ENCODE measurements at regions of chr7 and their contacts with region 1.

Region 1: DNA sequence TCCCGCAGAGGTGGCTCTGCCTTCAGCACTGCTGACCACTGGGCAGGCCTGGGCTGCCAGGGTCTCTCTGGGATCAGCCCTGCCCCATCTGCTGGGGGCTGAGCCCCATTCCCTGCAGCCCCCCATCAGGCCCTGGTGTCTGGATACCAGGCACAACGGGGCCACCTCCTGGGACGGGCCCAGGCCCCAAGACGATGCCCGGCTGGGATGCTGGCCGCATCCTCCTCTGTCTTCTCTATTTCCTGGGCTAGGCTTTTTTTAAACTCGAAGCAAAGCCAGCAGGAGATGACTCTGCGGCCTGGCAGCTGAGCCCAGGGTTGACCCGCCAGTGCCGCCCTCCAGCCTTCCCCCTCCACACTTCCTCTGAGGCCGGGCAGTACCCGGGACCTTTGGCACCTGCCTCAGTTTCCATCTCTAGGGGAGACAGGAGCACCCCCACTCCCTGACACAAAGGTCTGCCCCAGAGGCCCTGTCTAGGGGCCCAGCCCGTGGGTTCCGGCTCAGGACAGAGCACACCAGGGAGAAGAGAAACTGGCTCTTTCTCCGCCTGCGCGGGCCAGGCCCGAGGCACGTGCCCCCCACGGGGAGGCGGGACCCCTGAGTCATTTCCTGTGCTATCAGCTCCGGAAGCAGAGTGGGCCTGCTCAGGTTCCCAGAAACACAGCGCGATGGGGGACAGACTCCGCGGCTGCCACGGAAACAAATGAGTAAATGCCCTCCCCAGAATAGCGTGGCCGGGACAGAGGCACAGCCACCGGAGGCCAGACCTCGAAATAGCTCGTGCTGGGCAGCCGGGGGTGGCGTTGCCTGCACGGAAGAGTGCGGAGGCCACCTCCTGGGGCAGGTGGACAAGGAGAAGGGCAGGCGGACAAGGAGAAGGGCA is 84.6 kb upstream of the PDGFA start:
- DNase-seq: peak; percentile 89
- H3K4me3 Mint-ChIP-seq: peak overlapping the region; percentile 83
- H3K27ac Mint-ChIP-seq: peak overlapping the region; percentile 99
- H3K4me1 Mint-ChIP-seq: peaks cover 46% of the 10 kb centered on the region
- H3K27me3 Mint-ChIP-seq: no peaks in the 10 kb centered on the region

Region 2: GRCh38 chr7:362402-363096 is 241.7 kb before region 1 on chr7:
- intact Hi-C with region 1: loop called (anchors 10 kb)
- DNase-seq: peak; percentile 21
- H3K4me3 Mint-ChIP-seq: peak overlapping the region; percentile 48
- H3K27ac Mint-ChIP-seq: peak overlapping the region; percentile 78
- H3K4me1 Mint-ChIP-seq: peaks cover 51% of the 10 kb centered on the region
- H3K27me3 Mint-ChIP-seq: peaks cover 9% of the 10 kb centered on the region

Region 3: DNA sequence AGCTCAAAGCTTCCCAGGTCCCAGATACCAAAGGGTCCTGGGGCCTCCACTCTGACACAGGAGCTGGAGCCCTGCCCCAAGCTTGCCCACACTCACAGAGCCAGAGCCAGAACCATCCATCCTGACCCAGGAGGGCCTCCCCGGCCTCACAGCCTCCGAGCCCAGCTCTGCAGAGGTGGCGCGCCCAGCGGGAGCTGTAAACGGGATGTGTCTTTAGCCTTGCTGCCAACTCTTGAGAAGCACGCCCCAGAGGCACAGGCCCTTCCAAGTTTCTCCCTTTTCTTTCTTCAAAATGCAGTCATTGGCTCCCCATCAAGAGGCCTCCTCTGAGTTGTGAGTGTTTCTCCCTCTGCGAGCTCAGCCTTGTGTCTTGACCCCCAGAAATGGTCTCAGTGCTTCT is 159.6 kb before region 1 on chr7:
- intact Hi-C with region 1: no loop called
- DNase-seq: no peak
- H3K4me3 Mint-ChIP-seq: no peak overlapping the region
- H3K27ac Mint-ChIP-seq: no peak overlapping the region
- H3K4me1 Mint-ChIP-seq: no peaks in the 10 kb centered on the region
- H3K27me3 Mint-ChIP-seq: peaks cover 1% of the 10 kb centered on the region

Region 4: GRCh38 chr7:531777-532176 is 72.5 kb before region 1 on chr7:
- intact Hi-C with region 1: no loop called
- DNase-seq: no peak
- H3K4me3 Mint-ChIP-seq: no peak overlapping the region
- H3K27ac Mint-ChIP-seq: no peak overlapping the region
- H3K4me1 Mint-ChIP-seq: no peaks in the 10 kb centered on the region
- H3K27me3 Mint-ChIP-seq: peaks cover 3% of the 10 kb centered on the region

Region 5: DNA sequence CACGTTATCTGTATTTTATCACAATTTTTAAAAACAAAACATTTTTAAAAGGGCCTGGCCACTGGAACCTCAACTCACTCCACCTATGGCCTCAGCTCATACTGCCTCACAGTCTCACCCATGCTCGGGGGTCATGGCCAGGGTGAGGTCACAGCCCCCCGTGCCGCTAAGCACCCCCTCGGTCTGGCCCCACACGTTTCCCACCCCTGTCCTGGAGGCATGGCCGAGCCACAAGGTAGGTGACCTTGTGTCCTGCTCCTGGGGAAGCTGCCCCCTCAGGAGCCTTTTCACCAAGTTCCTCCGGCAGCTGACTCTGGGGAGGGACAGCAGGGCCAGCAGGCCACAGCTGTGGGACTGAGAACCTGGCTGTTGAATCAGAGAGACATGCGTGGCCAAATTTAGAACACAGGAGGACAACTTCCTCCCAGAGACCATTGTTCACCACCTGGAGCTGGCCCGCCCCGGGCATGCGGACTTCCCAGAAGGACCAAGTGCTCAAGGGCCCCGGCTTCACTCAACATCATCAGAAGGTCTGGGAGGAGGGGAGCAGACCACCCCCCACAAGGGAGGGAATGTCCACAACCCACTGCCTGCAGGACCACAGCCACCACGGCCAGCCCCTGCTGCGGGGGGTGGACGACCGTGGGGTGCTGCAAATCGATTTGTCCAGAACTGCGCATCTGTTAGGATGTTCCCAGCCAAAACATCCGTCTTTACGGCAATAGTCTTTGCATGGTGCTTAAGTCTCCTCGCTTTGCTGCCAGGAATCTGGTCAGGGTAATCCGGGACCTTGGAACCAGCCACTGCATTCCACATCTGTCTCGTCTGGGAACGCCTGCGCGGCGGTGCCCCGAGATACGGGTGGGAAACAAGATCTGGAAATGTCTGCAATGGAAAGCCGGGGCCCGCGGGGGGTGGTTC is 36.0 kb before region 1 on chr7:
- intact Hi-C with region 1: no loop called
- DNase-seq: no peak
- H3K4me3 Mint-ChIP-seq: no peak overlapping the region
- H3K27ac Mint-ChIP-seq: no peak overlapping the region
- H3K4me1 Mint-ChIP-seq: no peaks in the 10 kb centered on the region
- H3K27me3 Mint-ChIP-seq: no peaks in the 10 kb centered on the region

Region 6: GRCh38 chr7:584122-584465 is 20.1 kb before region 1 on chr7:
- intact Hi-C with region 1: loop called (anchors 1 kb)
- DNase-seq: peak; percentile 83
- H3K4me3 Mint-ChIP-seq: peak overlapping the region; percentile 82
- H3K27ac Mint-ChIP-seq: peak overlapping the region; percentile 87
- H3K4me1 Mint-ChIP-seq: peaks cover 35% of the 10 kb centered on the region
- H3K27me3 Mint-ChIP-seq: peaks cover 2% of the 10 kb centered on the region

Region 7: GRCh38 chr7:726084-726853 is 122.0 kb after region 1 on chr7 and contains the start of gene DNAAF5:
- intact Hi-C with region 1: loop called (anchors 1 kb)
- DNase-seq: peak; percentile 84
- H3K4me3 Mint-ChIP-seq: peak within 1 kb of the TSS; percentile 92
- H3K27ac Mint-ChIP-seq: peak within 1 kb of the TSS; percentile 96
- H3K4me1 Mint-ChIP-seq: peaks cover 23% of the 10 kb centered on the region
- H3K27me3 Mint-ChIP-seq: no peaks in the 10 kb centered on the region
- total RNA-seq, gene DNAAF5: 42.7 and 52.4 TPM in 2 replicates

Region 8: GRCh38 chr7:831596-832166 is 227.4 kb after region 1 on chr7:
- intact Hi-C with region 1: loop called (anchors 5 kb)
- DNase-seq: no peak
- H3K4me3 Mint-ChIP-seq: peak overlapping the region; percentile 80
- H3K27ac Mint-ChIP-seq: peak overlapping the region; percentile 93
- H3K4me1 Mint-ChIP-seq: peaks cover 30% of the 10 kb centered on the region
- H3K27me3 Mint-ChIP-seq: no peaks in the 10 kb centered on the region